ENCODE measurements at regions of chr3 and their contacts with region 1.

Region 1: DNA sequence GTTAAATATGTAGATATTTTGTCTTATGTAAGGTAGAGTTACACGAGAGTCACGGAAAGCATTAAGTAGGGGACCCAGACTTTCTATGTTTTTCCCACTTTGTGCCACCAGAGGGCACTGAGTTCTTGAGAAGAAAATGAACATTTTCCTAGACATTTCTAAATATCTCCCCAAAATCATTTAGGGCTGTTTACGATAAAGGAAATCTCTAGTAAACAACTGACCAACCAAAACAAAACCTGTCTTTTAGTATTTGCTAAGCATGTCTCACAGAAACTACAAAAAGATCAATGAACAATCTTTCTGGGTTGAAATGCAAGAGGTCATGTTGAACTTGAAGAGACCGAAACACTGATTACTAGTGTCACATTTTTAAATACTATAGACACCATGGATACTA is 16.1 kb downstream of the POU1F1 start:
- DNase-seq: peak; percentile 67
- ATAC-seq: peak; percentile 55
- H3K4me3 Mint-ChIP-seq: no peak overlapping the region
- H3K27ac Mint-ChIP-seq: no peak overlapping the region
- H3K4me1 Mint-ChIP-seq: peaks cover 10% of the 10 kb centered on the region
- H3K27me3 Mint-ChIP-seq: peaks cover 4% of the 10 kb centered on the region

Region 2: GRCh38 chr3:87025661-87026635 is 234.3 kb before region 1 on chr3:
- CTCF ChIA-PET with region 1: no interaction called
- POLR2A ChIA-PET with region 1: no interaction called
- DNase-seq: no peak
- ATAC-seq: no peak
- H3K4me3 Mint-ChIP-seq: no peak overlapping the region
- H3K27ac Mint-ChIP-seq: no peak overlapping the region
- H3K4me1 Mint-ChIP-seq: no peaks in the 10 kb centered on the region
- H3K27me3 Mint-ChIP-seq: no peaks in the 10 kb centered on the region

Region 3: GRCh38 chr3:87132801-87133200 is 127.5 kb before region 1 on chr3:
- CTCF ChIA-PET with region 1: no interaction called
- POLR2A ChIA-PET with region 1: no interaction called
- DNase-seq: no peak
- ATAC-seq: no peak
- H3K4me3 Mint-ChIP-seq: no peak overlapping the region
- H3K27ac Mint-ChIP-seq: no peak overlapping the region
- H3K4me1 Mint-ChIP-seq: no peaks in the 10 kb centered on the region
- H3K27me3 Mint-ChIP-seq: no peaks in the 10 kb centered on the region

Region 4: GRCh38 chr3:87233805-87234204 is 26.5 kb before region 1 on chr3:
- CTCF ChIA-PET with region 1: interaction called, 11 read pairs
- POLR2A ChIA-PET with region 1: no interaction called
- DNase-seq: no peak
- ATAC-seq: no peak
- H3K4me3 Mint-ChIP-seq: no peak overlapping the region
- H3K27ac Mint-ChIP-seq: no peak overlapping the region
- H3K4me1 Mint-ChIP-seq: peaks cover 9% of the 10 kb centered on the region
- H3K27me3 Mint-ChIP-seq: no peaks in the 10 kb centered on the region

Region 5: DNA sequence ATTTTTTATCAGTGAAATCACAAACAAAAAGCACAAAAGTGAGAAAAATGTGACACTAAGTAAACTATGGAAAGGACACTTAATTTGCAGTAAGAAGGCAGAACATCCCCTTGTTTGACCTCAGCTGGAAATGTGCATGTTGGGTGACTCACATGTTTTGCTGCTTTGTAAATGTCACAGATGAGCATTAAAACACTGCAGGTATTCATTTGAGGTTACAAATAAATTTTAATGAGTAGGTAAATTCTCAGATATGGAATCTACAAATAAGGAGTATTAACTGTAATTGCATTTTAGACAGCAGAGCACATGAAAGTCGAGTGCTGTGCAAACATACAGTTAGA is 12.9 kb before region 1 on chr3:
- CTCF ChIA-PET with region 1: interaction called, 21 read pairs
- POLR2A ChIA-PET with region 1: no interaction called
- DNase-seq: no peak
- ATAC-seq: no peak
- H3K4me3 Mint-ChIP-seq: no peak overlapping the region
- H3K27ac Mint-ChIP-seq: no peak overlapping the region
- H3K4me1 Mint-ChIP-seq: peaks cover 2% of the 10 kb centered on the region
- H3K27me3 Mint-ChIP-seq: no peaks in the 10 kb centered on the region

Region 6: DNA sequence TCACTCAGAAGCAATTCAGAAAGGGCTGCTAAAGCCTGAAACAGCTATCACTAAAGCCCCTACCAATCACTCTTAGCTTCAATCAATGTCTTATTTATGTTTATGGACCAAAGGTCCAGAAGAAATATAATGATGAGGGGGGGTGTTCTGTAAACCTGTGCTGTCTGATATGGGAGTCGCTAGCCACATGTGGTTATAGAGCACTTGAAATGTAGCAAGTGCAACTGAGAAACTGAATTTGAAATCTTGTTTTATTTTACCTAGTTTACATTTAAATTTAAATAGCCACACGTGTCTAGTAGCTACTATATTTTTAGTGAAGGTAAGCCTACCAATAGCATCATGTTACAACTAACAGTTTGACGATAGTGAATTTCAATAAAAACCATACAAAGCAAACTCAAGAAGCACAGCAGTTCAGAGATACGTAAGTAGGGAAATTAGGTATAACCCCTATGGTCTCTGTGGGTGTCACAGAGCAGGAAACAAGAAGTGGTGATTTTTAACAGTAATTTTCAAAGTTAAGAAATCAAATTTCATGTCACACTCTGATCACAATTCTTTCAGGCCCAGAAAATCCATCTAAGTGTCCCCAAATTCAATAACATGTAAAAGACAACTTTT is 12.6 kb after region 1 on chr3:
- CTCF ChIA-PET with region 1: interaction called, 53 read pairs
- POLR2A ChIA-PET with region 1: interaction called, 3 read pairs
- DNase-seq: no peak
- ATAC-seq: no peak
- H3K4me3 Mint-ChIP-seq: no peak overlapping the region
- H3K27ac Mint-ChIP-seq: no peak overlapping the region
- H3K4me1 Mint-ChIP-seq: peaks cover 50% of the 10 kb centered on the region
- H3K27me3 Mint-ChIP-seq: no peaks in the 10 kb centered on the region

Region 7: DNA sequence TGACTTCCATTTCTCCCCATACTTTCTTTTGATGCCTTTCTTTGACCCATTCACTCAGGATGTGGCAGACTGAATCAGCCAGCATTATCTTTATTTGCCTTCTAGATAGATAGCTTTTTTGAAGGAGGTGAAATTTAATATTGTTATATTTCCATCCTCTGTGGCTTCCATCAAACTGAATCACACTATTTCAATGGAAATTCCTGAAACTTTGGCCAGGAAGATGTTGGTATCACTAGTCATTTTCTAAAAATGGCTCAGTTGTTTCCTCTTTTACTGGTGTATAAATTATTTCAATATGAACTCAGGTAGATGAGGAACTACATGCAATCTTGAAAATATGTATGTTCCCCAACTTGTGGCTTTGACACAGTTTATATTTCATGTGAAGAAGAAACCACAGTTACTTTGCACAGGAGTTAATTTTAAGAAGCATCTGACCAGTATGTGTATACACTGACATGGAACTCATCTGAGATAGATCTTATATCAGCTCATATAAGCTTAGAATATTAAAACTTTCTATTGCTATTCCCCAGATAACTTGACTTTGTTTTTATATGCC is 550.3 kb after region 1 on chr3:
- CTCF ChIA-PET with region 1: no interaction called
- POLR2A ChIA-PET with region 1: no interaction called
- DNase-seq: no peak
- ATAC-seq: no peak
- H3K4me3 Mint-ChIP-seq: no peak overlapping the region
- H3K27ac Mint-ChIP-seq: no peak overlapping the region
- H3K4me1 Mint-ChIP-seq: no peaks in the 10 kb centered on the region
- H3K27me3 Mint-ChIP-seq: no peaks in the 10 kb centered on the region

Measured in activated CD8-positive, alpha-beta T cell treated with anti-CD3 and anti-CD28 coated beads, Interleukin-2, amount 10 ng/mL, durations not matched to agents 7 days and 5 days (primary cell).